Activated CD4-positive, alpha-beta T cell treated with anti-CD3 and anti-CD28 coated beads, Interleukin-2, amount 10 ng/mL, durations not matched to agents 24 days and 14 days (primary cell): ENCODE measurements at regions of chr3 and their contacts with region 1.

Region 1: DNA sequence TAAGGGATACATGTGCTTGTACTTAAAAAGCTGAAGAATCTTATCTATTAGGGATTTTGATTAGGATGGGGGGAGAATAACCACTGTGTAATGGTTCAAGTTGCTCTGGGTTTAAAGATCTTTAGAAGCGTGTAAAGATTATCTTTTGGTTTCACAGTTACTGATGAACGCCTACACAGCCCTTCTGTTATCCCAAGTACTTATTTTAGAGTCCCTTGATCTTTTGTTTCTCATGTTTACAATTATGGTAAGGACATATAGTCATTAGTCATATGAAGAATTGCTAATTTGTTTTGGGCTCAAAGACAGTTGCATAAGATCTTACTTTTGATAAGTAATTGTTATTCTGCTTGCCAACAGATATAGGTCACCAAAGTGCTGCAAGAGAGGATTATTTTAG is 160.1 kb downstream of the PLCL2 start:
- DNase-seq: no peak
- H3K4me3 Mint-ChIP-seq: peak overlapping the region; percentile 15
- H3K27ac Mint-ChIP-seq: peak overlapping the region; percentile 48
- H3K4me1 Mint-ChIP-seq: peaks cover 39% of the 10 kb centered on the region
- H3K27me3 Mint-ChIP-seq: no peaks in the 10 kb centered on the region

Region 2: DNA sequence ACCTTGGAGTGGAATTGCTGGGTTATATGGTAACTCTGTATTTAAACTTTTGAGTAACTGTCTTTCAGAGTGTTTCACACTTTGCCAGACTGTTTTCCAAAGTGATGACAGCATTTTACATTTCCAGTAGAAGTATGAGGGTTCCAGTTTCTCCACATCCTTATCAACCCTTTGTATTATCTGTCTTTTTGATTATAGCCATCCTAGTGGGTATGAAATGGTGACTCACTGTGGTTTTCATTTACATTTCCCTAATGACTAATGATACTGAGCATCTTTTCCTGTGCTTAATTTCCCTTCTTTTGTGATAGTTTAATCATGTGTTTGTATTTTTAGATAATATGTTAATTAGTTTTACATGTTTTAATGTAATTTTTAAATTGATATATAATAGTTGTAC is 301.6 kb before region 1 on chr3:
- intact Hi-C with region 1: no loop called
- DNase-seq: no peak
- H3K4me3 Mint-ChIP-seq: no peak overlapping the region
- H3K27ac Mint-ChIP-seq: no peak overlapping the region
- H3K4me1 Mint-ChIP-seq: no peaks in the 10 kb centered on the region
- H3K27me3 Mint-ChIP-seq: no peaks in the 10 kb centered on the region

Region 3: GRCh38 chr3:16828815-16829214 is 216.0 kb before region 1 on chr3:
- intact Hi-C with region 1: loop called (anchors 5 kb)
- DNase-seq: peak; percentile 84
- H3K4me3 Mint-ChIP-seq: no peak overlapping the region
- H3K27ac Mint-ChIP-seq: no peak overlapping the region
- H3K4me1 Mint-ChIP-seq: peaks cover 16% of the 10 kb centered on the region
- H3K27me3 Mint-ChIP-seq: peaks cover 9% of the 10 kb centered on the region

Region 4: DNA sequence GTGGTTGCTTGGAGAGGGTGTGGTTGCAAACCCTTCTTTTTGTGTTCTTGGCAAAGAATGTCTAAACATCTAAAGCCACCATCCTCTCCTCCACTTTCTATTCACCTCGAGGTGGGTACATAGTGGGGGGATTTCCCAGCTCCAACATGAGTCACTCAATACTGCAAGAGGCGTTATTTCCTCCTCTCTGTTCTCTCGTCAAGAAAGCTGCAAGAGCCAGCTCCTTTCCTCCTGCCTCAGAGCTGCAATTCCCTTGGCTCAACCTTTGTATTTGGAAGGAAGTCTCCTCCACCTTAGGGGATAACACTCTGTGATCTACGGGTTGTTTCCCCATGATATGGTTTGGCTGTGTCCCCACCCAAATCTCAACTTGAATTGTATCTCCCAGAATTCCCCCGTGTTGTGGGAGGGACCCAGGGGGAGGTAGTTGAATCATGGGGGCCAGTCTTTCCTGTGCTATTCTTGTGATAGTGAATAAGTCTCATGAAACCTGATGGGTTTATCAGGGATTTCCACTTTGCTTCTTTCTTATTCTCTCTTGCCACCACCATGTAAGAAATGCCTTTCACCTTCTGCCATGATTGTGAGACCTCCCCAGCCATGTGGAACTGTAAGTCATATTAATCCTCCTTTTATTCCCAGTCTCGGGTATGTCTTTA is 21.7 kb before region 1 on chr3:
- intact Hi-C with region 1: loop called (anchors 1 kb)
- DNase-seq: peak; percentile 87
- H3K4me3 Mint-ChIP-seq: peak overlapping the region; percentile 61
- H3K27ac Mint-ChIP-seq: peak overlapping the region; percentile 88
- H3K4me1 Mint-ChIP-seq: peaks cover 52% of the 10 kb centered on the region
- H3K27me3 Mint-ChIP-seq: no peaks in the 10 kb centered on the region

Region 5: GRCh38 chr3:17032407-17033034 is 12.3 kb before region 1 on chr3:
- intact Hi-C with region 1: loop called (anchors 1 kb)
- DNase-seq: peak; percentile 55
- H3K4me3 Mint-ChIP-seq: peak overlapping the region; percentile 1
- H3K27ac Mint-ChIP-seq: peak overlapping the region; percentile 46
- H3K4me1 Mint-ChIP-seq: peaks cover 61% of the 10 kb centered on the region
- H3K27me3 Mint-ChIP-seq: no peaks in the 10 kb centered on the region

Region 6: DNA sequence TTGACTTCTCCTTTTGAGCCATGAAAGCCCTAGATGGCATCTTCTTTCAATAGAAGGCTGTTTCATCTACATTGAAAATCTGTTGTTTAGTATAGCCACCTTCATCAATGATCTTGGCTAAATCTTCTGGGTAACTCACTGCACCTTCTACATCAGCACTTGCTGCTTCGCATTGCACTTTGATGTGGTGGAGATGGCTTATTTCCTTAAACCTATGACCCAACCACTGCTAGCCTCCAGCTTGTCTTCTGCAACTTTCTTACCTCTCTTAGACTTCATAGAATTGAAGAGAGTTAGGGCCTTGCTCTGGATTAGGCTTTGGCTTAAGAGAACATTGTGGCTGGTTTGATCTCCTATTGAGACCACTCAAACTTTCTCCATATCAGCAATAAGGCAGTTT is 29.7 kb after region 1 on chr3:
- intact Hi-C with region 1: loop called (anchors 2 kb)
- DNase-seq: peak; percentile 86
- H3K4me3 Mint-ChIP-seq: peak overlapping the region; percentile 31
- H3K27ac Mint-ChIP-seq: peak overlapping the region; percentile 2
- H3K4me1 Mint-ChIP-seq: peaks cover 55% of the 10 kb centered on the region
- H3K27me3 Mint-ChIP-seq: no peaks in the 10 kb centered on the region

Region 7: DNA sequence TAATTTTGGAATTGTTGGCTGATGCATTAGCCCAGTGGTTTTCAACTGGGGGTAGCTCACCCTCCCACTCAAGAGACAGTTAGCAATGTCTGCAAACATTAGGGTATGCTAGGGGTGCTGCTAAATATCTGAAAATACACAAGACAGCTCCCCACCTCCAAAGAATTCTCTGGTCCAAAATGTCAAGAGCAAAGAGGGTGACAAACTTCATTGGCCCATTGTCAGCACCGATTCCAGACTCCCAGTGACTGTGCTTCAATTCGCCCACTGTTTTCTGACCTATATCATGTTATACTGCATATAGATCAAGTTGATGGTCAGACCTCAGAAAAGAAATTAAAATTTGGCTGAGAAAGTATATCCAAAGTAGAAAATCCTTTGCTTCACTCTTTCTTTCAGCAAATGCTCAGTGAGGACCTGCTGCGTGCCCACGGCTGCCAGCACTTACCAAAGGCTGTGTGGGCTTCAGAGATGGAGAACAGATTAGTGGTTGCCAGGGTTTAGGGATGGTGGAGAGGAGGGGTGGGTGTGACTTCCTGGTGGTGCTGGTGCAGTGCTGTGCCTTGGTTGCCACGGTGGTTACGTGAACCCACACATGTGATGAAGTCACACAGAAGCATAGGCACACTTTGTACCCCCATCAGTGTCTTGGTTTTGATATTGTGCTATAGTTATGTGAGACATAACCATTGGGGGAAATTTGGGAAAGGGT is 43.9 kb after region 1 on chr3:
- intact Hi-C with region 1: loop called (anchors 5 kb)
- DNase-seq: peak; percentile 73
- H3K4me3 Mint-ChIP-seq: peak overlapping the region; percentile 20
- H3K27ac Mint-ChIP-seq: no peak overlapping the region
- H3K4me1 Mint-ChIP-seq: peaks cover 34% of the 10 kb centered on the region
- H3K27me3 Mint-ChIP-seq: no peaks in the 10 kb centered on the region

Region 8: GRCh38 chr3:17136136-17136721 is 91.4 kb after region 1 on chr3:
- intact Hi-C with region 1: no loop called
- DNase-seq: no peak
- H3K4me3 Mint-ChIP-seq: no peak overlapping the region
- H3K27ac Mint-ChIP-seq: no peak overlapping the region
- H3K4me1 Mint-ChIP-seq: peaks cover 5% of the 10 kb centered on the region
- H3K27me3 Mint-ChIP-seq: peaks cover 3% of the 10 kb centered on the region

Region 9: DNA sequence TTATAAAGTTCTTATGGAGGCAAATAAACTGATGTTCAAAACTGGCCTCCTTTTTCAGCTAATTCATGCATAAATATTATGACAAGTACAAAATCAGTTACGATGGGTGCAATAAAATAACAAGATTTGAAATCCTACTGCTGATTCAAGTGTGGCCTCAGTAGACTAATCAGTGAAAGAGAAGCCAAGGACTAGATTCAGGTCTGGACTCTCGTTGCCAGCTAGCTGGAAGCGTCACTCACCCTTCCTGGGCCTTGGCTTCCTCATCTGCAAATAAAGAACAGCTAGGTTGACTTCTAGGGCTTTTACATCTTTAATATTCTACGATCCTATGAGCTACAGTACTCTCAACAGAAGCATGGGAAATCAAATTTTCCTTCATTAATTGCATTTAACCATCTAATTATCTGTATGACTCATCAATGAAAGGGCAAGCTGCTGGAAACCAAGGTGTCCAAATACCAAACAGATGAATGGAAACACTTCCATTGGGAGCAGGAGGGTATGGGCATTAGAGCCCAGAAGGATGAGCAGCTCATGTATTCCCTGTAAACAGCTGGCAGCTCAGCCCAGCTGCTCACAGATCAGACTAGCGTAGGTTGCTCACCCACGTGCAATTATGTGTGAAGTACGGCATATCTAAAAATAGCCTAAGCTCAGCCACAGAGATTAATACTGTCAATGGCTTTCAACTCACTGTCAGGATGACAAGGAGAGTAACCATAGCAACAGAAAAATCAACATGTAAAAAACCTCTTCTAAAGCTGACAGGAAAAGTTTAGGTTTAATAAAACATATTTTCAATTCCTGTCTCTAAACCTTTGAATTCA is 134.7 kb after region 1 on chr3:
- intact Hi-C with region 1: loop called (anchors 1 kb)
- DNase-seq: peak; percentile 50
- H3K4me3 Mint-ChIP-seq: no peak overlapping the region
- H3K27ac Mint-ChIP-seq: no peak overlapping the region
- H3K4me1 Mint-ChIP-seq: peaks cover 27% of the 10 kb centered on the region
- H3K27me3 Mint-ChIP-seq: peaks cover 1% of the 10 kb centered on the region

Region 10: GRCh38 chr3:17964108-17964507 is 919.3 kb after region 1 on chr3:
- intact Hi-C with region 1: no loop called
- DNase-seq: peak; percentile 40
- H3K4me3 Mint-ChIP-seq: no peak overlapping the region
- H3K27ac Mint-ChIP-seq: no peak overlapping the region
- H3K4me1 Mint-ChIP-seq: no peaks in the 10 kb centered on the region
- H3K27me3 Mint-ChIP-seq: peaks cover 2% of the 10 kb centered on the region